Transverse colon (tissue), 4 donors: ENCODE measurements at regions of chr2 and their contacts with region 1.

Region 1: DNA sequence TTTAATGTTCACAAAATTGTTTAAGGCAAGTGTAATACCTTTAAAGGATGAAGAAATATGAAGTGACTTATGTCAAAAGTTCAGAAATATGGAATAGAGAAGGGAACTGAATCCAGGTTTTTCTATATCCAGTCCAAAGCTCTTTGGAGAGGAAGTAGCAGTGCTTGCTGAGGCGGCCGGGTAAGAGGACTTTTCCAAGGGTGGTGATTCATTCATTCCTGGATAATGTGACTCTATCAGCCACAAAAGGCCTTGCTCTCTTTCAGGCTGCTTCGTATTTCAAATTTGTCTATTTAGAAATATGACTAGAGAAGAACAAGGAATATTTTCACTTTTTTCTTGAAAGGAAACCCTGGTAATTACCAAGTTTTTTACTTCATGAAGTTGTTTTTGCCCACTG is 830.1 kb upstream of the ZEB2 start:
- DNase-seq: no peak
- H3K4me3 ChIP-seq: no peak overlapping the region
- H3K27ac ChIP-seq: no peak overlapping the region
- H3K4me1 ChIP-seq: no peaks in the 10 kb centered on the region
- H3K27me3 ChIP-seq: no peaks in the 10 kb centered on the region
- CTCF ChIP-seq: no peak
- EP300 ChIP-seq: no peak
- POLR2A ChIP-seq: no peak

Region 2: DNA sequence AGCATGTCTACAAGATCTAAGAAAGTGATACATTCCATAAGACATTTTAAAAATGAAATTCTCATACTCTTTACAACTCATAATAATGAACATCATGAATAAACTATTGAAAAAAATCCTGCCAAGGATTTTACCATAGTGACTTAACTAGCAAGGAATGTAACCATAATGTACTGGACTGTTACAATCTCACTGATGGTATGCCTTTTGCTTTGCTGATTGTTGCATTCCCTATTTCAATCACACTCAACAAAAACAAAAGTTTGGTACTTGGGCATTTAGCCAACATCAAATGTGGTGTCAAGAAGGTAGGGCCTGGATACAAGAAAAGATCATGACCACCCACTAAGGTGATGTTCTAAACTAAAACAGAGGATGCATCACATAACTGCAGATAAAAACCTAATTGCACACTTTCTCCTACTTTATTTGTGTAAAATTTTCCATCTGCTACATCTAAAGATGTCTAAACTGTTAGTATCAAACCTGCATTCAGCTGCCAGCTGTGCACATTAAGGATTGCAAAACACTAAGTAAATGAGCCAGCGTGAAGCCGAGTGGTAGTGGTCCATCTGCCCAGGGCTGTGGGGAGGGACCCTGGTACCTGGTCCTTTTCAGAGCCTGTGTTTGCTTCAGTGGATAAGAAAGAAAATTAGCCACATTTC is 1394.5 kb before region 1 on chr2:
- in situ Hi-C with region 1: no loop called
- intact Hi-C with region 1: no loop called
- DNase-seq: no peak
- H3K4me3 ChIP-seq: no peak overlapping the region
- H3K27ac ChIP-seq: peak overlapping the region in 2 of 4 donors; percentile 8 to 38
- H3K4me1 ChIP-seq: no peaks in the 10 kb centered on the region
- H3K27me3 ChIP-seq: no peaks in the 10 kb centered on the region
- CTCF ChIP-seq: no peak
- EP300 ChIP-seq: no peak
- POLR2A ChIP-seq: no peak

Region 3: GRCh38 chr2:145366341-145366740 is 16.3 kb after region 1 on chr2:
- in situ Hi-C with region 1: no loop called
- intact Hi-C with region 1: loop called (anchors 1 kb)
- DNase-seq: no peak
- H3K4me3 ChIP-seq: no peak overlapping the region
- H3K27ac ChIP-seq: no peak overlapping the region
- H3K4me1 ChIP-seq: no peaks in the 10 kb centered on the region
- H3K27me3 ChIP-seq: no peaks in the 10 kb centered on the region
- CTCF ChIP-seq: no peak
- EP300 ChIP-seq: no peak
- POLR2A ChIP-seq: no peak